Activated T-helper 1 cell treated with anti-CD3 and anti-CD28 coated beads, Interleukin-12 subunit alpha, Interleukin-12 subunit beta, Interleukin-2, Interleukin-4 antibody, amounts not matched to agents 30 ng/mL and 10 ng/mL and 1 ng/mL, durations not matched to agents 14 hours and 24 hours and 36 hours (primary cell): ENCODE measurements at regions of chr11 and their contacts with region 1.

Region 1: GRCh38 chr11:118145285-118146227 is 7.1 kb downstream of the SCN4B start:
- DNase-seq: peak; percentile 86
- H3K4me3 Mint-ChIP-seq: peak overlapping the region; percentile 87
- H3K27ac Mint-ChIP-seq: peak overlapping the region; percentile 70
- H3K4me1 Mint-ChIP-seq: peaks cover 17% of the 10 kb centered on the region
- H3K27me3 Mint-ChIP-seq: peaks cover 48% of the 10 kb centered on the region

Region 2: DNA sequence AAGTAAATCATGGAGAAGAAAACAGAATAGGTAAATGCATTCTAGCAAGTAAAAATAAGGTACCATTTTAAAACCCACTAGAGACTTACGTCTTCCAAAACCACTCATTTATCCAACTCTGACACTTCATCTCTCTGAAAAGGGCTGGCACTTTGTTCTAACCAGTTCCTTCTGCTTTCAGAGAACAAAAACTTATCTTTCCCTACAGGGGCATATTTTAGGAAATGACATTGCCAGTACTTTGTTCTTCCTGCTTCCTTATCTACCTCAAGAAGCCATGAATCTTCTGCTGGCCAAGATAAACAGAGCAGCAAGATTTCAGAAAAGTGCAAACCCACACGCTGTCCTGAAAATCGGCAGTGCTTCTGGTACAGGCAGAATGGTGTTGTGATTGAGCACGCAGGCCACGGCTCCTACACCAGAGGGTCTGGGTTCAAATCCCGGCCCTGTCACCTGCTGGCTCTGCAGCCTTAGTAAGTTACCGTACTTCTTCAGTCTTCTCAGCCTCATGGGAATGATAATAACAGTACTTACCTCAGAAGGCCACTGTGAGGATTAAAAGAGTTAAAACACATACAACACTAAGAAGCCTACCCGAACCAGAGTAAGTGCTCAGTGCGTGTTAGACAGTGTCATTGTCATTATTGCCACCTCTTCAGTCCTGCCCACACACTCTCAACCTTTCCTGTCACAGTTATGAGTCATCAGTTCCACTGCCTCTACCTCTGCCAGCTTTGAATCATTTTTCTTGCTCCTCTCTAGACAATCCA is 95.6 kb after region 1 on chr11:
- intact Hi-C with region 1: loop called (anchors 5 kb)
- DNase-seq: peak; percentile 66
- H3K4me3 Mint-ChIP-seq: peak overlapping the region; percentile 83
- H3K27ac Mint-ChIP-seq: peak overlapping the region; percentile 99
- H3K4me1 Mint-ChIP-seq: peaks cover 89% of the 10 kb centered on the region
- H3K27me3 Mint-ChIP-seq: no peaks in the 10 kb centered on the region

Region 3: DNA sequence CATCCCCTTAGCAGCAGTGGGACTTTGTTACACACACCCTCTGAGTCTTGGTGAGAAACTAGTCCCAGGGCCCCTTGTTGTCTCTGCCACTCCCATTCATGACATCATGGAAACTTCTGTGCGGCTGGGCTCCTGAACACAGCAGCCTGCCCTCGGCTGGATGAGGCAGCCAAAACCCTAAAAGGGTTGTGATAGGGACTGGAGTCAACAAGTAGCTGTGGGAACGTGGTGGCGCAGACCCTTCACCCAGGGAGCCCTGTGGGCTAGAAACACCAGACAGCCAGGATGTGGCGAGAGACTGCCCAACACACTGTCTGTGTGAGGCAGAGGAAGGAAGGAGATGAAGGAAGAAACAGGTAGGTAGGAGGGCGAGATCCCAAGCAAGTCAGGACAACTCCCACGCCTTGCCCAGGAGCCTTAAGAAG is 193.1 kb after region 1 on chr11:
- intact Hi-C with region 1: loop called (anchors 5 kb)
- DNase-seq: peak; percentile 86
- H3K4me3 Mint-ChIP-seq: peak overlapping the region; percentile 90
- H3K27ac Mint-ChIP-seq: peak overlapping the region; percentile 99
- H3K4me1 Mint-ChIP-seq: peaks cover 68% of the 10 kb centered on the region
- H3K27me3 Mint-ChIP-seq: no peaks in the 10 kb centered on the region

Region 4: DNA sequence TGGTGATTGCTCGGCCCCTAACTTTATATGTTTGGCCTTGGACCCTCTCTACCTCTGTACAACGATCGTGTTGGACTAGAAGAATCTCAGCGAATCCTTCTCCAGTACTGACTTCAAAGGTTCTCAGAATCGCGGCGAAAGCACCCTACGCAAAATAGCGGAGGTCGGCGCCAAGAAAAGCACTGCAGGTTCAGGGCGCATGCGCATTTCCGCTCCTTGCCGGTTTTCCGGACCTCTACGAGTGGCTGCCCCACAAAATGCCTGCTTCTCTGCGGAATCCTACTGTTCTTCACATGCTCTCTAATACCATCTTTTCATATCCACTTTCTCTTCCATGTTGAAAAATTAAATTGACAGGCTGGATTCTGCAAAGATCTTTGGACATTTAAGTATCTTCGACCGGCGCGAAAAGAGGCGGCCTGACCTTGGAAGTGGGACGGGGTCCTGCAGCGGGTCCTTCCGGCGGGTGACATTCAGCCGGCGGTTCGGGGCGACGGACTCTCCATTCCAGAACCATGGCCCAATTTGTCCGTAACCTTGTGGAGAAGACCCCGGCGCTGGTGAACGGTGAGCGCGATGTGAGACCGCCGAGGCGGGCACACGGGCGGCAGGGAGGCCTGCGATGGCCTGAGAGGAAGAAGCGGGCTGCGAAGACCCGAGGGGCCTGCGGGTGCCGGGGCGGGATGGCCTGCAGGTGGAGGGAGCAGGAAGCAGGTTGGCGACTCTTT is 255.8 kb after region 1 on chr11 and contains the start of gene ATP5MG:
- intact Hi-C with region 1: loop called (anchors 1 kb)
- DNase-seq: peak; percentile 87
- H3K4me3 Mint-ChIP-seq: peak within 1 kb of the TSS; percentile 93
- H3K27ac Mint-ChIP-seq: peak within 1 kb of the TSS; percentile 96
- H3K4me1 Mint-ChIP-seq: peaks cover 68% of the 10 kb centered on the region
- H3K27me3 Mint-ChIP-seq: no peaks in the 10 kb centered on the region
- total RNA-seq, gene ATP5MG: 205 and 216 TPM in 2 replicates

Region 5: DNA sequence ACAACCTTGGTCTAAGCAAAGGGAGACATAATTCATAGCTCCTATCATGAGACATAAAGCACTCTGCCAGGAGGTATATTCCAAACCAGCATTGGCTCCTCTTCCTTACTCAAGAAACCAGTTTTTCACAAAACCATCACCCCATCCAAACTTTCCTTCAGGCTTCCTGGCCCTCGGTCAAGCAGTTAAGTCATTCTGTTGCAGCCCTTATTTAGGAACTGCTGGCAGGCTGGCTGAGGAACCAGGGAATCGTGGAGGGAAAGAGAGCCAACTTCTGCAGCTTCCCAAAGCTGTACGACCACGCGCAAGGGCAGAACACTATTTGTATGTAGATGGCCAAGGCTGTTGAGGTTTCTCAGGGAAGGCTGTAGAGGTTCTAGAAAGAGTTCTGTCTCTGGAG is 419.5 kb after region 1 on chr11:
- intact Hi-C with region 1: loop called (anchors 1 kb)
- DNase-seq: no peak
- H3K4me3 Mint-ChIP-seq: peak overlapping the region; percentile 81
- H3K27ac Mint-ChIP-seq: peak overlapping the region; percentile 29
- H3K4me1 Mint-ChIP-seq: peaks cover 7% of the 10 kb centered on the region
- H3K27me3 Mint-ChIP-seq: peaks cover 2% of the 10 kb centered on the region

Region 6: DNA sequence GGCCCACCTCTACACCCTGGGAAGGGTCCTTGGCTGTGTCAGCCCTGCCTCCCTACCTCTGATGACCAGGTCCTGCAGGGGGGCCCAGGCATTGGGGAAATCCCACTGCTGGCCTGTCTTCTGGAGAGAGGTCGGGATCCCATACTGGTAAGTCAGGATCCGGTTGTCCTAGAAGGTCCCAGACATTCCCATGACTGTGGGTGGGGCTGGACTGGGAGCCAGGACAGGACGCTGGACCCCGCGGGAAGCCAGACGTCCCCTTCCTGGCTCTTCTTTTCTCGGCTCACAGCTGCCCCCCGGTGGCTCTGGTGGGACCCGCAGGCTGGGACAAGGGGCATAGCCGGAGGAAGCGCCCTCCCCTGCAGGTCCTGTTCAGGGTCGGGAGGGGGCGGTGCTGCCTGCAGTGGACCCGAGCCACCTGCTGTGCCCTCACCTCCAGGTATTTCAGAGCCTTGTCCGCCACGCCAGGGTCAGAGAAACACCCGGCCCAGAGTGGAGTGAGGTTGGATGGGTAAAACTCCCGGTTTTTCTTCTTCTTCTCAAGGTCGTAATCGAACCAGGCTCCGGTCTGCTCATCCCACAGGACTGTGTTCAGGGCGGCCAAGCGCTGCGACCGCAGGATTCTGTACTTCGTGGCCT is 513.9 kb after region 1 on chr11:
- intact Hi-C with region 1: loop called (anchors 1 kb)
- DNase-seq: peak; percentile 74
- H3K4me3 Mint-ChIP-seq: no peak overlapping the region
- H3K27ac Mint-ChIP-seq: no peak overlapping the region
- H3K4me1 Mint-ChIP-seq: no peaks in the 10 kb centered on the region
- H3K27me3 Mint-ChIP-seq: peaks cover 9% of the 10 kb centered on the region